B cell (primary cell): ENCODE measurements at regions of chr22 and their contacts with region 1.

Region 1: DNA sequence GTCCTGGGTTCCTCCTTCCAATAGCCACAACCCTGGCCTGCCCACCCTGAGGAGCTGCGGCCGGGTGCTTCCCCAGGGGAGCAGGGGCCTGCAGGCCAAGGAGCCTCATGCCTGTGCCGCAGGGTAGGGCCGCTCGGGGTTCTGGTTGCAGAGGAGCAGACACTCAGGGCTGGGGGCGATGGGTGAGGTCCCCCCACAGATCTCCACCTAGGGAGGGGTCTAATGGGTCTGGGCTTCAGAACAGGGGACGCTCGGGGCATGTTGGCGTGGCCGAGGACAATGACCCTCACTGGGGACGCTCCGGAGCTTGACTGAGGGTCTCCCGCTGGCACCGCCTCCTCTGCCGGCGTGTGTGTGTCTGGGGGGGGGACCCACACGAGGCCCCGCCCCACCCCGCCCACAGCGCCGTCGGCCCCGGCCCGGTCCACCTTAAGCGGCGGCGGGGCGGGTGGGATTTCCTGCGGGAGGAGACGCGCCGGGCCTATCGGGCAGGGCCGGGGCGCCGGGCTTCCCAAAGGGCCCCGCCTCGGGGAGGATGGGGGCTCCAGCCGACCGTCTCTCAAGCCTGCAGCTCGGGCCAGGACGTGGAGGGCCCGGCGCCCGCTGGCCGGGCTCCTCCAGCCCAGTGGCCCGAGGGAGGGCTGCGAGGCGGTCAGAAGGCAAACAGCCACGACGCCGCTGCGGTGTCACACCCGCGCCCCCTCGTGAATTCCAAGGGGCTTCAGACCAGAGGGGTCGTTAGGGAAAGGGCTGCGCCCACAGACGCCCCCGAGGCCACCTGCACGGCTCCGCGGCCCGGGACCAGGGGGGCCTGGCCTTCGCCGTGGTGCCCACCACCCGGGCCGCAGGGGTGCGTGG is 636 bp upstream of the ZDHHC8 start:
- DNase-seq: peak; percentile 86
- ATAC-seq: peak; percentile 85
- H3K4me3 ChIP-seq: peak overlapping the region; percentile 6 to 97 (median 87)
- H3K4me3 Mint-ChIP-seq: peak overlapping the region; percentile 70
- H3K27ac ChIP-seq: peak overlapping the region; percentile 54 to 79
- H3K27ac Mint-ChIP-seq: peak overlapping the region; percentile 80
- H3K4me1 ChIP-seq: peaks cover 14 to 37% of the 10 kb centered on the region in 2 donors
- H3K4me1 Mint-ChIP-seq: peaks cover 24% of the 10 kb centered on the region
- H3K27me3 ChIP-seq: no peaks in the 10 kb centered on the region
- H3K27me3 Mint-ChIP-seq: no peaks in the 10 kb centered on the region
- CTCF ChIP-seq: no peak

Region 2: GRCh38 chr22:20066617-20067383 is 64.2 kb before region 1 on chr22:
- CTCF ChIA-PET with region 1: no interaction called
- POLR2A ChIA-PET with region 1: no interaction called
- intact Hi-C with region 1: no loop called
- DNase-seq: no peak
- ATAC-seq: no peak
- H3K4me3 ChIP-seq: no peak overlapping the region
- H3K4me3 Mint-ChIP-seq: no peak overlapping the region
- H3K27ac ChIP-seq: no peak overlapping the region
- H3K27ac Mint-ChIP-seq: no peak overlapping the region
- H3K4me1 ChIP-seq: no peaks in the 10 kb centered on the region
- H3K4me1 Mint-ChIP-seq: no peaks in the 10 kb centered on the region
- H3K27me3 ChIP-seq: no peaks in the 10 kb centered on the region
- H3K27me3 Mint-ChIP-seq: no peaks in the 10 kb centered on the region
- CTCF ChIP-seq: no peak

Region 3: DNA sequence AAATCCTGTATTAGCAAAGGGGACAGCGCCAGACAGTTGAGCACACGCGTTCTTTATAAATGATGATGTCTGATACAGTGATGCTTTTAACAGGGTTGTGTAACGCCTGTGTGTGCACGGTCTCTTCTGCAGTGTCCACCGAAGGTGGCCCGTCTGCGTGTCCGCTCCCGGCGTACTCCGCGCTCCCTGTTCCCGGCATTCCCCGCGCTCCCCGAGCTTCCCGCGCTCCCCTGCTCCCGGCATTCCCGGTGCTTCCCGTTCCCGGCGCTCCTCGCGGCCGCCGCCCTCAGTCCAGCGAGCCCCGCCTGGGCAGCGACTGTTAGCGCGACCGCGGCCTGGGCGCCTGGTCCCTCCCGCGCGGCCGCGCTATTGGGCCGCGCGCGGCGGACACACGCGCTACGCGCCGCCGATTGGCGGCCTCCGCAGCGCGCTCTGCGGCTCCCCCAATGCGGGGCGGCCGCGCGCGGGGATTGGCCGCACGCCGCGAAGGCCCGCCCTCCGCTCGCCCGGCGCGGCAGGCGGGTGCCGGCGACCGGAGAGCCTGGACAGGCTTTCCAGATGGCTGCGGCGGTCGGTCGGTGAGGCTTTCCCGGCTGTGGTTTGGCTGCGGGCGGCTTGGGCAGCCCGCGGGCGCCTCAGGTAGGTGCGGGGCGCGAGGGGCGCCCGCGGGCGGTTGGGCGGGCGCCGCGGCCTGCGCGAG is 51.1 kb before region 1 on chr22 and contains the start of gene DGCR8:
- CTCF ChIA-PET with region 1: no interaction called
- POLR2A ChIA-PET with region 1: no interaction called
- intact Hi-C with region 1: loop called (anchors 1 kb)
- DNase-seq: peak; percentile 89
- ATAC-seq: peak; percentile 95
- H3K4me3 ChIP-seq: peak within 1 kb of the TSS; percentile 71 to 95 (median 86)
- H3K4me3 Mint-ChIP-seq: peak within 1 kb of the TSS; percentile 95
- H3K27ac ChIP-seq: peak within 1 kb of the TSS; percentile 29 to 70
- H3K27ac Mint-ChIP-seq: peak within 1 kb of the TSS; percentile 89
- H3K4me1 ChIP-seq: peaks cover 9 to 21% of the 10 kb centered on the region in 2 donors
- H3K4me1 Mint-ChIP-seq: peaks cover 37% of the 10 kb centered on the region
- H3K27me3 ChIP-seq: no peaks in the 10 kb centered on the region
- H3K27me3 Mint-ChIP-seq: no peaks in the 10 kb centered on the region
- CTCF ChIP-seq: no peak
- total RNA-seq, gene DGCR8: 43.2 and 46.6 TPM in 2 replicates

Region 4: GRCh38 chr22:20205964-20206708 is 75.2 kb after region 1 on chr22:
- CTCF ChIA-PET with region 1: no interaction called
- POLR2A ChIA-PET with region 1: no interaction called
- intact Hi-C with region 1: loop called (anchors 1 kb)
- DNase-seq: peak; percentile 70
- ATAC-seq: peak; percentile 82
- H3K4me3 ChIP-seq: peak overlapping the region; percentile 49 to 87 (median 72)
- H3K4me3 Mint-ChIP-seq: peak overlapping the region; percentile 91
- H3K27ac ChIP-seq: peak overlapping the region; percentile 72 to 86
- H3K27ac Mint-ChIP-seq: peak overlapping the region; percentile 92
- H3K4me1 ChIP-seq: peaks cover 18 to 24% of the 10 kb centered on the region in 2 donors
- H3K4me1 Mint-ChIP-seq: peaks cover 20% of the 10 kb centered on the region
- H3K27me3 ChIP-seq: no peaks in the 10 kb centered on the region
- H3K27me3 Mint-ChIP-seq: peaks cover 3% of the 10 kb centered on the region
- CTCF ChIP-seq: no peak

Region 5: GRCh38 chr22:20298803-20299735 is 168.1 kb after region 1 on chr22:
- CTCF ChIA-PET with region 1: no interaction called
- POLR2A ChIA-PET with region 1: no interaction called
- intact Hi-C with region 1: loop called (anchors 1 kb)
- DNase-seq: peak; percentile 89
- ATAC-seq: peak; percentile 90
- H3K4me3 ChIP-seq: peak overlapping the region in 4 of 5 experiments; percentile 28 to 75 (median 58)
- H3K4me3 Mint-ChIP-seq: peak overlapping the region; percentile 90
- H3K27ac ChIP-seq: no peak overlapping the region
- H3K27ac Mint-ChIP-seq: peak overlapping the region; percentile 70
- H3K4me1 ChIP-seq: peaks cover 4 to 10% of the 10 kb centered on the region in 2 donors
- H3K4me1 Mint-ChIP-seq: peaks cover 8% of the 10 kb centered on the region
- H3K27me3 ChIP-seq: peaks cover 0 to 7% (median 0%) of the 10 kb centered on the region in 4 experiments
- H3K27me3 Mint-ChIP-seq: peaks cover 8% of the 10 kb centered on the region
- CTCF ChIP-seq: no peak

Region 6: GRCh38 chr22:20507253-20508066 is 376.5 kb after region 1 on chr22 and contains the start of gene MED15:
- CTCF ChIA-PET with region 1: no interaction called
- POLR2A ChIA-PET with region 1: no interaction called
- intact Hi-C with region 1: loop called (anchors 5 kb)
- DNase-seq: peak; percentile 92
- ATAC-seq: peak; percentile 85
- H3K4me3 ChIP-seq: peak within 1 kb of the TSS; percentile 77 to 97 (median 87)
- H3K4me3 Mint-ChIP-seq: peak within 1 kb of the TSS; percentile 97
- H3K27ac ChIP-seq: peak within 1 kb of the TSS; percentile 87 to 96
- H3K27ac Mint-ChIP-seq: peak within 1 kb of the TSS; percentile 99
- H3K4me1 ChIP-seq: peaks cover 32 to 39% of the 10 kb centered on the region in 2 donors
- H3K4me1 Mint-ChIP-seq: peaks cover 51% of the 10 kb centered on the region
- H3K27me3 ChIP-seq: no peaks in the 10 kb centered on the region
- H3K27me3 Mint-ChIP-seq: no peaks in the 10 kb centered on the region
- CTCF ChIP-seq: no peak
- total RNA-seq, gene MED15: 134 and 156 TPM in 2 replicates